Cardiac septum (tissue), 1 donor: ENCODE measurements at regions of chr11 and their contacts with region 1.

Region 1: DNA sequence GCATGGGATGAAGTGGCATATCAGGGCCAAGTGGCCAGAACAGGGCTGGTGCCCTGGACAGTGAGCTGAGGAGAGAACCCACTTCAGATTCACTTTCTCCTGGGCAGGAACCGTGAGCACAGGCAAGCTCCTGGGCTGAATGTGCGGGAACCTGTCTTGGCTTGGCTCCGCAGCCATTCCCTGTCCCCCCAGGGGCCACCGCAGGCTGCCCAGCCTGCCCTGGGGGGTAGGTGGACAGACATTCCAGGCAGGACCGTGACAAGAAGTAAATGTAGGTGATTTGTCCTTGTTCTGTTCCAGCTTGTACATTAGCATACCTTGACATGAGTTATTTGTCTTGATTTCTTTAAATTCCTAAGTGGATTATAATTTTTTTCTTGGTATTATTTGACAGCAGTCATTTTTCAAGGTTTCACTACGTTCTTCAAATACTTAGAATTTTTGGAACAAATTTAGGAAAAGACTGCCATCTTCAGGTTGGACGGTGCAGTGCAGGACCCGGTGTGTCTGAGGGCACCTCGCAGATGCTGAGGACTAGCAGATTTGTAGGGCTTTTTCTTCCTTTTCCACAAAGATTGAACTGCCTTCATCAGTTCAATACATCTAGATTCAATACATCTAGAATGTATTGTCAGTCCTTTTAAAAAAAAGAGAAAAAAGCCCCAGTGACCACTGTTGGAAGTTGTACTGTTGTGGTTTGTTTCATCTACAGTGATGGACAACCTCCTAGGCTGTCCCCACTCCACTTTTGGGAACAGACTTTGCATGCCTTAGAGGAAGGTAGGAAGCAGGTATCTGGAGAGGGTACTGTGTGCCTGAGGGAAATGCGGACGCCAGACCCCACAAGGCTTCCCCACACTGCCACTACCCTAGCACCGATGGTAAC is 115.1 kb upstream of the RASSF10 start:
- DNase-seq: no peak

Region 2: DNA sequence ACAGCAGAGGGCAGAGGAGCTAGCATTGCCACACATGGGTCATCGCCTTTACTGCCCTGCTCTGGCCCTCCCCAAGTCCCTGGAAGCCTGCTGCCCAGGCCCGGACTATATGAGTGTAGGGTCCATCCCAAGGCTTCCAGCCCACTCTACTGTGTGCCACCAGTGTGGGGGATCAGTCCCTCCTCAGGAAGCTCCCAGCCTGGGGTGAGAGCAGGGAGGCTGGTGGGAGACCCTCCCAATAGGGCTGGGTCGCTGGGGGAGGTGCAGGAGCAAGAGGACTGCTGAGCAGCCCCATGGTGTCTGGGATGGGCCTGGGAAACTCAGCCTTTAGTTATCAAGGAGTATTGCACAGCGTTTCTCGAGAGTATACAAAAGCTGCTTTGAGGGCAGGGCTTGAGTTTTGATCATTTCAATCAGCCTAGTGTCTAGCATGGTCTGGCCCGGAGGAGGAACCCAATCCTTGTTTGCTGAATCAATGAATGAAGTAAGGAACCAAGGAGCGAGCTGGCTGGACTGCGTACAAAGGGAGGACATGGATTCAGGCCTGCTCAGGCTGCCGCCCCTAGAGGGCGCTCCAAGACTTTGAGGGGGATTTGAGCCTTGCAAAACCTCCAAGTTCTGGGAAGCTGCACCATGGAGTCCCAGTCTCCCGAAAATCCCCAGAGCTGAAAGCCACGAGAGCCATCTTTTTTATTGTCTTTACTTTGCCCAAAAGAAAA is 605.7 kb before region 1 on chr11:
- intact Hi-C with region 1: loop called (anchors 5 kb)
- DNase-seq: peak; percentile 88

Region 3: GRCh38 chr11:12331239-12331874 is 562.7 kb before region 1 on chr11:
- intact Hi-C with region 1: loop called (anchors 2 kb)
- DNase-seq: no peak

Region 4: GRCh38 chr11:12411806-12412727 is 482.0 kb before region 1 on chr11:
- intact Hi-C with region 1: loop called (anchors 5 kb)
- DNase-seq: no peak

Region 5: GRCh38 chr11:12693479-12694181 is 200.4 kb before region 1 on chr11:
- intact Hi-C with region 1: loop called (anchors 5 kb)
- DNase-seq: no peak